ENCODE measurements at regions of chr1 and their contacts with region 1.

Region 1: DNA sequence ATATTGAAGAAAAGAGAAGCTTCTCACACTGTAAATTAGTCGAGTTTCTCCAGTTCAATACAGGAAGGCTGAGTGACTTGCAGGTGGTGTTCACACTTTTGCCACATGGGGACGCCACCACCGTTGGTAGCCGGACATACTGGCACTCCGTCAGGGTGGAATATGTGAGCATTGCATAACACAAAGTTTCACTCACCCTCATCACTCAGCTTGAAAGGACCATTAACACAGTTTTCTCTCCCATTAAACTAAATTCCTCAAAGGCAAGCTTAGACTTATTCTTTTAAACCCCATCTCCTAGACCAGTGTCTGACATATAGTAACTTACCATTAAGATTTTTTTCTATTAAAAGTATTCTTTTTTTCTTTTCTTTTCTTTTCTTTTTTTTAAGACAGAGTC is 105.3 kb upstream of the SERBP1 start:
- DNase-seq: peak; percentile 75 to 88 (median 85)
- H3K4me3 ChIP-seq: no peak overlapping the region
- H3K27ac ChIP-seq: no peak overlapping the region
- H3K4me1 ChIP-seq: no peaks in the 10 kb centered on the region
- H3K27me3 ChIP-seq: no peaks in the 10 kb centered on the region
- CTCF ChIP-seq: peak; percentile 80 to 94 (median 91)
- EP300 ChIP-seq: no peak
- POLR2A ChIP-seq: no peak

Region 2: GRCh38 chr1:67760030-67760821 is 224.8 kb after region 1 on chr1:
- intact Hi-C with region 1: loop called (anchors 2 to 5 kb)
- DNase-seq: peak; percentile 37 to 66 (median 63)
- H3K4me3 ChIP-seq: no peak overlapping the region
- H3K27ac ChIP-seq: no peak overlapping the region
- H3K4me1 ChIP-seq: peaks cover 7% of the 10 kb centered on the region
- H3K27me3 ChIP-seq: no peaks in the 10 kb centered on the region
- CTCF ChIP-seq: peak; percentile 52 to 84 (median 79)
- EP300 ChIP-seq: no peak
- POLR2A ChIP-seq: no peak

Region 3: GRCh38 chr1:67832737-67833601 is 297.5 kb after region 1 on chr1 and contains the start of gene GNG12:
- intact Hi-C with region 1: loop called in 2 of 4 experiments (anchors 5 to 10 kb)
- DNase-seq: peak; percentile 73 to 83 (median 80)
- H3K4me3 ChIP-seq: peak within 1 kb of the TSS; percentile 75
- H3K27ac ChIP-seq: peak within 1 kb of the TSS; percentile 65 to 72
- H3K4me1 ChIP-seq: peaks cover 6% of the 10 kb centered on the region
- H3K27me3 ChIP-seq: no peaks in the 10 kb centered on the region
- CTCF ChIP-seq: no peak
- EP300 ChIP-seq: no peak
- POLR2A ChIP-seq: peak; percentile 49
- total RNA-seq, gene GNG12: 50.6 to 84.4 (median 68.0) TPM

Region 4: DNA sequence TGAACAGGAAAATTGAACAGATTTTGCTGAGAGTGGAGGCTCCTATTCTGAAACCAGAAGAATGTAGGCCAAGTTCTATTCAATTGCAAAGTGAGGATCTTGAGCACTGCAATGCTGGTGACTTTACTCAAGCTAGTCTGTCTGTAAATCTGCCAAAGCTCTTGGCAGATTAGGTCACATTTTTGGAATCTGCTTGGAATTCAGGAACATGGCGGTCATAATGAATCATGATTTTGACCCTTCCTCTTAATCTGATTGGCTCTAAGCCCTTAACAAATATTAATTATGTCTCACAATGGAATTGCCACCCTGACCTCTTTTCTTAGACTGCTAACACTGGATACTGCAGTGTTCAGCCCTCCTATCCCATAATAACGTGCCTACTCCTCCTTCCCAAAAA is 305.0 kb after region 1 on chr1:
- intact Hi-C with region 1: loop called in 2 of 4 experiments (anchors 10 kb)
- DNase-seq: no peak
- H3K4me3 ChIP-seq: no peak overlapping the region
- H3K27ac ChIP-seq: no peak overlapping the region
- H3K4me1 ChIP-seq: peaks cover 7% of the 10 kb centered on the region
- H3K27me3 ChIP-seq: no peaks in the 10 kb centered on the region
- CTCF ChIP-seq: no peak
- EP300 ChIP-seq: no peak
- POLR2A ChIP-seq: no peak

Measured in ovary (tissue), 10 donors.